Psoas muscle (tissue), 8 donors: ENCODE measurements at regions of chrX and their contacts with region 1.

Region 1: GRCh38 chrX:124764354-124764753 is 418.0 kb downstream of the SH2D1A start:
- DNase-seq: no peak
- ATAC-seq: no peak
- H3K4me3 ChIP-seq: no peak overlapping the region
- H3K27ac ChIP-seq: no peak overlapping the region
- H3K4me1 ChIP-seq: no peaks in the 10 kb centered on the region
- H3K27me3 ChIP-seq: no peaks in the 10 kb centered on the region
- CTCF ChIP-seq: no peak

Region 2: GRCh38 chrX:124805486-124805885 is 41.1 kb after region 1 on chrX:
- intact Hi-C with region 1: no loop called
- DNase-seq: no peak
- ATAC-seq: no peak
- H3K4me3 ChIP-seq: no peak overlapping the region
- H3K27ac ChIP-seq: no peak overlapping the region
- H3K4me1 ChIP-seq: no peaks in the 10 kb centered on the region
- H3K27me3 ChIP-seq: no peaks in the 10 kb centered on the region
- CTCF ChIP-seq: no peak

Region 3: DNA sequence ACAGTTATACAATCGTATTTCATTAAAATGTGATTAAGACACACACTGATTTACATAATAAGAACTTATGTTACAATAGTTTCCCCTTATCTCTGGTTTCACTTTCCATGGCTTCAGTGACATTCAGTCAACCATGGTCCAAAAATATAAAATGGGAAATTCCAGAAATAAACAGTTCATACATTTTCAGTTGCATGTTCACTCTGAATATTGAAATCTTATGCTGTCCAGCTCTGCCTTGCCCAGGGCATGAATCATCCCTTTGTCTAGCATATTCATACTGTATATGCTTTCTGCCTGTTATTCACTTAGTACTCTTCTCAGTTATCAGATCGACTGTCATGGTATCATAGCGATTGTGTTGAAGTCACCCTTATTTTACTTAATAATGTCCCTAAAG is 1575.6 kb after region 1 on chrX:
- intact Hi-C with region 1: loop called in 1 of 2 experiments (anchors 5 kb)
- DNase-seq: no peak
- ATAC-seq: no peak
- H3K4me3 ChIP-seq: no peak overlapping the region
- H3K27ac ChIP-seq: no peak overlapping the region
- H3K4me1 ChIP-seq: no peaks in the 10 kb centered on the region
- H3K27me3 ChIP-seq: no peaks in the 10 kb centered on the region
- CTCF ChIP-seq: no peak